Activated CD4-positive, alpha-beta memory T cell treated with anti-CD3 and anti-CD28 coated beads, Interleukin-2, amount 10 ng/mL, durations not matched to agents 7 days and 5 days (primary cell): ENCODE measurements at regions of chr2 and their contacts with region 1.

Region 1: GRCh38 chr2:197838036-197838435 is 33.6 kb downstream of the PLCL1 start:
- DNase-seq: peak; percentile 23
- H3K4me3 Mint-ChIP-seq: peak overlapping the region; percentile 53
- H3K27ac Mint-ChIP-seq: peak overlapping the region; percentile 71
- H3K4me1 Mint-ChIP-seq: peaks cover 26% of the 10 kb centered on the region
- H3K27me3 Mint-ChIP-seq: peaks cover 9% of the 10 kb centered on the region

Region 2: DNA sequence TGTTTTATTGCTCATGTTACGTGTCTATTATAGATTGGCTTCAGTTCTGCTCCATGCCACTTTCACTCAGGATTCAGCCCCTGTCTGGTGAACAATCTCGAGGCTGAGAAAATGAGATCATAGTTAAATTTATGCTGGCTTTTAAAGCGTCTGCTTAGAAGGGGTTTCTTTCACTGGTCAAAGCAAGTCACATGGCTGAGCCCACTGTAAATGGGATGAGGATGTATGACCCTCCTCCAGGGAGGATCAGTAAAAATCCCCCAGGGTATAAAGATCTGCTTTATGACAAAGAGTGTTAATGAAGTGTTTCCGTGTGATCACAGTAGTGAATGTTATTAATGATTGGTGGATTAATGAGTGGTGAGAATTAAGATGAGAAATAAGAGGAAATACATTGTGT is 39.8 kb before region 1 on chr2:
- CTCF ChIA-PET with region 1: no interaction called
- POLR2A ChIA-PET with region 1: no interaction called
- DNase-seq: no peak
- H3K4me3 Mint-ChIP-seq: no peak overlapping the region
- H3K27ac Mint-ChIP-seq: no peak overlapping the region
- H3K4me1 Mint-ChIP-seq: peaks cover 2% of the 10 kb centered on the region
- H3K27me3 Mint-ChIP-seq: peaks cover 33% of the 10 kb centered on the region

Region 3: GRCh38 chr2:197813093-197813787 is 24.8 kb before region 1 on chr2:
- CTCF ChIA-PET with region 1: interaction called, 17 read pairs
- POLR2A ChIA-PET with region 1: no interaction called
- DNase-seq: no peak
- H3K4me3 Mint-ChIP-seq: no peak overlapping the region
- H3K27ac Mint-ChIP-seq: no peak overlapping the region
- H3K4me1 Mint-ChIP-seq: peaks cover 13% of the 10 kb centered on the region
- H3K27me3 Mint-ChIP-seq: peaks cover 8% of the 10 kb centered on the region

Region 4: DNA sequence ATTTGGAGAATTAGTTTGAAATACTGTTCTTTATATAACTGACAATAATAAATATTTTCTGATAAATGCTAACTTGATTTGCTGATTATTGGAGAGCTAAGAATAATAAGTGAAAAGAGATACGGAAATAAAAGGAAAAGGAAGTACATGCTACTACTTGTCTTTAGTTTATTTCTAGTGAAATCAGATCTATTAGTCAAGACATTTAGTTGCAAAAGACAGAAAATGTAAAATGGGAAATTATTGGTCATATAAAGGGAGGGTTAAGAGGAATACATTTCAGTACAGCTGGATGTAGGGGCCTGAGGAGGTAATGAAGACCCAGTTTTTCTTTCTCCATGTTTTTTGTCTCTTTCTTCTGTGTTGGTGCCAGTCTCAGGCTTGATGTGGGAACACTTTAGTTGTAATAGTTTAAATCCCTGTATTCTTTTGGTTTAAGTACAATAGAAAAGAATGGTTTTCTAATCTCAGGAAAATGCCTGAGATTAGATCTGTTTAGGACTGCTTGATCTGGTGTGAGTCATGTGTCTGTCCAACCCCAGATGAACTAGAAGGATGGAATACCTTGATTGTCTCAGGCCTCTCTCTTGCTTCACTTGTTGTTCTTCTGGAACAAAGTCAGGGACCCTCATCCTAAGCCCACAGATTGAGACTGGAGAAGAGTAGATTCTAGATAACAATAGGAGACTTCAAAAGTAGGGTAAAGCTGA is 24.4 kb after region 1 on chr2:
- CTCF ChIA-PET with region 1: no interaction called
- POLR2A ChIA-PET with region 1: no interaction called
- DNase-seq: no peak
- H3K4me3 Mint-ChIP-seq: no peak overlapping the region
- H3K27ac Mint-ChIP-seq: no peak overlapping the region
- H3K4me1 Mint-ChIP-seq: no peaks in the 10 kb centered on the region
- H3K27me3 Mint-ChIP-seq: peaks cover 2% of the 10 kb centered on the region